Activated CD8-positive, alpha-beta memory T cell treated with anti-CD3 and anti-CD28 coated beads, Interleukin-2, amount 10 ng/mL, durations not matched to agents 7 days and 5 days (primary cell): ENCODE measurements at regions of chr14 and their contacts with region 1.

Region 1: DNA sequence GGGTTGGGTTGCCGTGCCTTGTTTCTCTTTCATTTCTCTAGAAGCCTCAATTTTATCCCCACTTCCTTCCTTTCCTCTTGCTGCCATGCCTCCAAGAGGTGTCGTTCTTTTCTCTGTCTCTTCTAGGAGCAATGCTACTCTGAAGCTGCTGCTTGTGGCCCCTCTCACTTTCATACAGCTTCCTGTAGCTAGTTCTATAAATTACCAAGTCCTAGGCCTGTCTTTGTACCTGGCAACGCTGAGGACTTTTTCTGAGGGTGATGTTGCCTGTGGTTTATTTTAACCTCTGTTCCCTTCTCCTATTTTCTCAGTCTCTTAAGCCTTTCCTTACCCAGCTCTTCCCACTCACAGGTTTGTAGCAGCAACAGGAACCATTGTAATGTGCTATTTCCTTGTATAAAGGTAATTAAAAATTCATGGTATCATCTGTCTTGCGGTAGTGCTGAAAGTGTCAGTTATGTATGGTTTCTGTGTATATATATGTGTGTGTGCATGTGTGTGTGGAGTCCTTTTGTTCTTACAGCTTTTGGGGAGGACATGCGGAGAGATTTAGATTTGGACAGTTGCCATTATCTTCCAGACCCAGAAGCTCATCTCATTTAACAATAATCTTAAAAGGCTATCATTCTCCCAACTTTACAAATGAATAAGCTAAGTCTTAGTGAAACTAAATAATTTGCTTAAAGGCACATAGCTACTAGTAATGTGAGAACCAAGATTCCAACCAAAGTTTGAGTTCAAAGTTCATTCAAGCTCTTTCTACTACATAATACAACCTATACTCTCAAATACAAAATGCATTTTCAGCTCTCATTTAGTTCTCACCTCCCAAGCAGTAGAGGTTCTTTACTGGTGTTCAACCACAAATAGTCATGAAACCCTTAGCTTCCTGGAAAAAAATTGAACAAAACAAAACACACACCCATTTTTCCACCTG is 43.8 kb downstream of the DDHD1 start:
- DNase-seq: peak; percentile 86
- ATAC-seq: peak; percentile 91
- H3K4me3 Mint-ChIP-seq: no peak overlapping the region
- H3K27ac Mint-ChIP-seq: no peak overlapping the region
- H3K4me1 Mint-ChIP-seq: peaks cover 37% of the 10 kb centered on the region
- H3K27me3 Mint-ChIP-seq: no peaks in the 10 kb centered on the region

Region 2: GRCh38 chr14:53062856-53063255 is 46.5 kb before region 1 on chr14:
- CTCF ChIA-PET with region 1: no interaction called
- DNase-seq: no peak
- ATAC-seq: no peak
- H3K4me3 Mint-ChIP-seq: no peak overlapping the region
- H3K27ac Mint-ChIP-seq: no peak overlapping the region
- H3K4me1 Mint-ChIP-seq: peaks cover 9% of the 10 kb centered on the region
- H3K27me3 Mint-ChIP-seq: no peaks in the 10 kb centered on the region

Region 3: GRCh38 chr14:53152890-53153701 is 43.7 kb after region 1 on chr14 and contains the start of gene DDHD1:
- CTCF ChIA-PET with region 1: interaction called, 58 read pairs
- DNase-seq: peak; percentile 86
- ATAC-seq: peak; percentile 81
- H3K4me3 Mint-ChIP-seq: peak within 1 kb of the TSS; percentile 100
- H3K27ac Mint-ChIP-seq: peak within 1 kb of the TSS; percentile 99
- H3K4me1 Mint-ChIP-seq: peaks cover 34% of the 10 kb centered on the region
- H3K27me3 Mint-ChIP-seq: no peaks in the 10 kb centered on the region
- total RNA-seq, gene DDHD1: 70.7 to 80.5 TPM